CD4-positive, alpha-beta T cell (primary cell): ENCODE measurements at regions of chr17 and their contacts with region 1.

Region 1: DNA sequence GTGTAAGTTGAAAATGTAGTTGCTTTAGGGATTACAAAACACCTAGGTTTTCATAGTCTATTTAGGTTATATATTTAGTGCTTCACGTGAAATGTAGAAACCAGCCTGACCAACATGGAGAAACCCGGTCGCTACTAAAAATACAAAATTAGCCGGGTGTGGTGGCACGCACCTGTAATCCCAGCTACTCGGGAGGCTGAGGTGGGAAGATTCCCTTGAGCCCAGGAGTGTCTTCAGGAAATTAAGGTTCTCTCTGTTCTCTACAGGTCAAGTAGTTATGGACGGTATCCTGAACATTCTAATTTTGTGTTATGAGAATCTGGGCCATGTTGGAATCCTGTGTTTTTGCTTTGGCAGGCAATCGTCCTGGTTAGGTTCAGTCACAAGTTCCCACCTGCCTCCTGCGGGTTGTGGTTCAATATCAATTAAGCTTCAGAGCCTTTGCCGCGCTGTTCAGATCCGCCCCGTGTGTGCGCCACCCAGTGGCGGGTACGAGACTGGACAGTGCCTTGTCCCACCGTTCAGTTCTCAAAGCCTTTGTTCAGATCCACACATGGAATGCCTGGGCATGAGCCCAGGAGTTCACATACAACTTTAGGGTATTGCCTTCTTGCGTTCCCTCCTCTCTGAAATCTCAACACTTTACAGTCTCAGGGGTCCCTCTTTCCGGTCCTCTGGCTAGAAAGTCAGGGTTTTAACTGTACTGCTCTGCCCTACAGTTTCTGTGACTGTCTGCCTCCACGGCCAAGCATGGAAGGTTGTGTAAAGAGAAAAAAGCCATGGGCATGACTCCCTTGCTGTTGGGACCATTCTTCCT is 41.7 kb downstream of the HEATR6 start:
- DNase-seq: peak; percentile 43 to 86 (median 59)
- ATAC-seq: peak; percentile 97
- H3K4me3 ChIP-seq: no peak overlapping the region
- H3K4me3 Mint-ChIP-seq: no peak overlapping the region
- H3K27ac ChIP-seq: no peak overlapping the region
- H3K27ac Mint-ChIP-seq: no peak overlapping the region
- H3K4me1 ChIP-seq: peaks cover 8% of the 10 kb centered on the region
- H3K4me1 Mint-ChIP-seq: peaks cover 6% of the 10 kb centered on the region
- H3K27me3 ChIP-seq: peaks cover 0 to 21% of the 10 kb centered on the region in 2 experiments
- H3K27me3 Mint-ChIP-seq: peaks cover 21% of the 10 kb centered on the region
- CTCF ChIP-seq: peak; percentile 83

Region 2: GRCh38 chr17:58782833-58783779 is 1253.9 kb before region 1 on chr17:
- CTCF ChIA-PET with region 1: no interaction called
- POLR2A ChIA-PET with region 1: no interaction called
- intact Hi-C with region 1: no loop called
- DNase-seq: peak in 1 of 14 experiments; percentile 2
- ATAC-seq: no peak
- H3K4me3 ChIP-seq: no peak overlapping the region
- H3K4me3 Mint-ChIP-seq: no peak overlapping the region
- H3K27ac ChIP-seq: no peak overlapping the region
- H3K27ac Mint-ChIP-seq: no peak overlapping the region
- H3K4me1 ChIP-seq: no peaks in the 10 kb centered on the region
- H3K4me1 Mint-ChIP-seq: no peaks in the 10 kb centered on the region
- H3K27me3 ChIP-seq: no peaks in the 10 kb centered on the region
- H3K27me3 Mint-ChIP-seq: peaks cover 4% of the 10 kb centered on the region
- CTCF ChIP-seq: no peak

Region 3: GRCh38 chr17:59521204-59522126 is 515.5 kb before region 1 on chr17:
- CTCF ChIA-PET with region 1: no interaction called
- POLR2A ChIA-PET with region 1: no interaction called
- intact Hi-C with region 1: loop called (anchors 5 kb)
- DNase-seq: peak; percentile 27 to 81 (median 44)
- ATAC-seq: peak; percentile 78
- H3K4me3 ChIP-seq: no peak overlapping the region
- H3K4me3 Mint-ChIP-seq: no peak overlapping the region
- H3K27ac ChIP-seq: no peak overlapping the region
- H3K27ac Mint-ChIP-seq: no peak overlapping the region
- H3K4me1 ChIP-seq: peaks cover 4% of the 10 kb centered on the region
- H3K4me1 Mint-ChIP-seq: no peaks in the 10 kb centered on the region
- H3K27me3 ChIP-seq: no peaks in the 10 kb centered on the region
- H3K27me3 Mint-ChIP-seq: peaks cover 11% of the 10 kb centered on the region
- CTCF ChIP-seq: peak; percentile 98

Region 4: GRCh38 chr17:59914274-59914854 is 122.6 kb before region 1 on chr17:
- CTCF ChIA-PET with region 1: interaction called, 6 read pairs
- POLR2A ChIA-PET with region 1: no interaction called
- intact Hi-C with region 1: loop called in 1 of 2 experiments (anchors 5 kb)
- DNase-seq: peak in 4 of 14 experiments; percentile 19 to 70 (median 63)
- ATAC-seq: peak; percentile 77
- H3K4me3 ChIP-seq: no peak overlapping the region
- H3K4me3 Mint-ChIP-seq: no peak overlapping the region
- H3K27ac ChIP-seq: no peak overlapping the region
- H3K27ac Mint-ChIP-seq: no peak overlapping the region
- H3K4me1 ChIP-seq: no peaks in the 10 kb centered on the region
- H3K4me1 Mint-ChIP-seq: peaks cover 5% of the 10 kb centered on the region
- H3K27me3 ChIP-seq: no peaks in the 10 kb centered on the region
- H3K27me3 Mint-ChIP-seq: no peaks in the 10 kb centered on the region
- CTCF ChIP-seq: peak; percentile 76